Panc1 (cell line): ENCODE measurements at regions of chr22 and their contacts with region 1.

Region 1: GRCh38 chr22:28800308-28801077 is at the start of gene XBP1:
- DNase-seq: peak; percentile 42
- ATAC-seq: peak; percentile 98
- H3K4me3 ChIP-seq: peak within 1 kb of the TSS; percentile 77 to 95
- H3K27ac ChIP-seq: peak within 1 kb of the TSS; percentile 96
- H3K4me1 ChIP-seq: peaks cover 9% of the 10 kb centered on the region; the same call in 1 of the 2 replicates
- H3K27me3 ChIP-seq: no peaks in the 10 kb centered on the region
- CTCF ChIP-seq: no peak
- total RNA-seq, gene XBP1: 48.8 TPM

Region 2: GRCh38 chr22:28741758-28742561 is 58.5 kb before region 1 on chr22 and contains the starts of genes CHEK2 and HSCB:
- CTCF ChIA-PET with region 1: no interaction called
- POLR2A ChIA-PET with region 1: interaction called, 10 read pairs
- in situ Hi-C with region 1: no loop called
- intact Hi-C with region 1: no loop called
- DNase-seq: peak; percentile 89
- ATAC-seq: peak; percentile 97
- H3K4me3 ChIP-seq: peak within 1 kb of the TSS; percentile 79 to 91
- H3K27ac ChIP-seq: peak within 1 kb of the TSS; percentile 96
- H3K4me1 ChIP-seq: peaks cover 8% of the 10 kb centered on the region
- H3K27me3 ChIP-seq: no peaks in the 10 kb centered on the region
- CTCF ChIP-seq: no peak
- total RNA-seq, gene CHEK2: 29.5 TPM
- total RNA-seq, gene HSCB: 10.2 TPM

Region 3: GRCh38 chr22:28783786-28784671 is 16.5 kb before region 1 on chr22:
- CTCF ChIA-PET with region 1: no interaction called
- POLR2A ChIA-PET with region 1: interaction called, 10 read pairs
- in situ Hi-C with region 1: no loop called
- intact Hi-C with region 1: no loop called
- DNase-seq: no peak
- ATAC-seq: no peak
- H3K4me3 ChIP-seq: no peak overlapping the region
- H3K27ac ChIP-seq: no peak overlapping the region
- H3K4me1 ChIP-seq: no peaks in the 10 kb centered on the region
- H3K27me3 ChIP-seq: no peaks in the 10 kb centered on the region
- CTCF ChIP-seq: no peak